ENCODE measurements at regions of chr18 and their contacts with region 1.

Region 1: DNA sequence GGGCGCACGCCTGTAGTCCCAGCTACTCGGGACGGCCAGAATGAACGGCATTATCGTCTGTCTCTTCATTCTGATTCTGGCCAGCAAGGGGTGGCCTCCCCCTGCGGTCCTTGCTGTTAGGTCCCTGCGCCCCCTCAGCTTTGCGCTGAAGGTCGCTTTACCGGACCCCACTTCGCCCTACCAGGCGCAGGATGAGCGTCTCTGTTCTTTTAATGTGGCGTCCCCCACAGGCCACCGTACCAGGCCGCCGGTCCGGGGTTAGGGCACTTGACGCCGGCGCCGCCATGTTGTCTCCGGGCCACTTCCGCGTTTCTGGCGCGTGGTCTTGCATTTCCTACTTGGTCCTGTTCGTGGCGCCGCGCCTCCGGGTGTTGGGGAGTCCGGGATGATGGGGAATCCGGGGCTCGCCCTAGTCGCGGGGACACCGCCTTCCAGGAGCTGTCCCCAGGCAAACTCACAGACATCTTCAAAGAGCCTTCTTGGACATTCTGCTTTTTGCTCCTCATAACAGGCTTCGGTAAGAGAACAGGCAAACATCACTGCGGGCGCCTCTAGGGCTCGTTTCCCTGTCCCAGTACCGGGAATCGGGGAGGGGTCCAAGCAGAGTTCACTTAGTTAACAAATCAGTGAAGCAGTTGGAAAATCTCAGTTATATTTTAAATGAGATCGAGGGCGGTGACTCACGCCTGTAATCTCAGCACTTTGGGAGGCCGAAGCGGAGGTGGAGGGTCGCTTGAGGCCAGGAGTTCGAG is 8.5 kb upstream of the NARS1 start:
- DNase-seq: peak; percentile 99
- ATAC-seq: peak; percentile 100
- H3K4me3 ChIP-seq: peak overlapping the region; percentile 42 to 46
- H3K27ac ChIP-seq: peak overlapping the region in 1 of 2 donors; percentile 52
- H3K4me1 ChIP-seq: no peaks in the 10 kb centered on the region
- H3K27me3 ChIP-seq: no peaks in the 10 kb centered on the region

Region 2: DNA sequence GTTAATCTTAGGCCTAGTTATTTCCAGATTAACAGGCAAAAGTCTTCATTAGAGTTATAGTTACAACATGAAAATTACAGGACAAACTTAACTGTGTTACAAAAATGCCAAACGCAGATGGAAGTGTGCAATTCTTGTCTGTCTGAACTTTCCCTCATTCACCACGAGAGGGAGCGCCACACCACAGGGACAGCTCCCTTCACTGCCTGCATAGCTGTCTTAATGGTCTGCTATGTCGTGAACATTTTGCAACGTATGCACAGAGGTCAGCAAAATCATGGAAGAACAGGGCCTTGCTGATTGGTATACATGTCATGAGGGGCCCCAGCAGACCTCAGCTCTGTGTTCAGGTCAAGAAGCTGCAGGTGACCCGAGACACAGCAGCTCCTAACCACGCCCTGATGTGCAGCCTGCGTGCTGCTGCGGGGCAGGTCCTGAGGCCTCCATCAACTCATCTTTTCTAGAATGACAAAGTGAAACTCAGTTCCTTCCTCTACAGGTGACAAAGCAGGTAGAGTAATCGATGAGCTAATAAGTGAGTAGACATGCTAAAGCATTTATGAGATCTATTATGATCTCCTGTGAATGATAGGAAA is 251.7 kb after region 1 on chr18:
- intact Hi-C with region 1: loop called in 1 of 2 experiments (anchors 10 kb)
- DNase-seq: peak; percentile 67 to 77
- ATAC-seq: peak; percentile 82
- H3K4me3 ChIP-seq: no peak overlapping the region
- H3K27ac ChIP-seq: no peak overlapping the region
- H3K4me1 ChIP-seq: no peaks in the 10 kb centered on the region
- H3K27me3 ChIP-seq: no peaks in the 10 kb centered on the region